ENCODE measurements at regions of chr11 and their contacts with region 1.

Region 1: DNA sequence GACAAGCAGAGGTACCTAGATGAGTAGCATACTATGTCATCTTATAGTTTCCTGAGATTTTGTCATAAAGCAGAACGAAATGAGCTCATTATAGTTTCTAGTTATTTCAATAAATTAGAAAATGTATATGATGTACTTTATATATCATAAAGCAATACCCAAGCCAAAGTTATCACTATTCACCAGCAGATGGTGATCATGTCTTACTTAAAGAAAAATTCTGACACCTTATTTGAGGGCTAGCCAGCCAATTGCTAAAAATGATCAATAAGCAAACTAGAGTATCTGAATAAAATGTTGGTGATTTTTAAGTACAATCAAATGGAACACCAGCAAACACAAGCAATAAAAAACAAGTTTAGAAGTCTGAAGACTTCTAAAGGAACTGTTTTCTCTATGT is 44.1 kb downstream of the RSF1 start:
- DNase-seq: no peak
- ATAC-seq: no peak
- H3K4me3 Mint-ChIP-seq: no peak overlapping the region
- H3K27ac Mint-ChIP-seq: no peak overlapping the region
- H3K4me1 Mint-ChIP-seq: peaks cover 55% of the 10 kb centered on the region
- H3K27me3 Mint-ChIP-seq: no peaks in the 10 kb centered on the region
- CTCF ChIP-seq: no peak

Region 2: GRCh38 chr11:78000193-78000592 is 223.7 kb after region 1 on chr11:
- CTCF ChIA-PET with region 1: interaction called, 8 read pairs
- POLR2A ChIA-PET with region 1: no interaction called
- intact Hi-C with region 1: loop called (anchors 1 kb)
- DNase-seq: no peak
- ATAC-seq: peak; percentile 52
- H3K4me3 Mint-ChIP-seq: no peak overlapping the region
- H3K27ac Mint-ChIP-seq: peak overlapping the region; percentile 84
- H3K4me1 Mint-ChIP-seq: peaks cover 28% of the 10 kb centered on the region
- H3K27me3 Mint-ChIP-seq: peaks cover 2% of the 10 kb centered on the region
- CTCF ChIP-seq: no peak

Region 3: GRCh38 chr11:78045851-78046485 is 269.5 kb after region 1 on chr11:
- CTCF ChIA-PET with region 1: interaction called, 9 read pairs
- POLR2A ChIA-PET with region 1: no interaction called
- intact Hi-C with region 1: loop called (anchors 1 kb)
- DNase-seq: peak; percentile 81
- ATAC-seq: peak; percentile 98
- H3K4me3 Mint-ChIP-seq: peak overlapping the region; percentile 72
- H3K27ac Mint-ChIP-seq: no peak overlapping the region
- H3K4me1 Mint-ChIP-seq: peaks cover 6% of the 10 kb centered on the region
- H3K27me3 Mint-ChIP-seq: peaks cover 5% of the 10 kb centered on the region
- CTCF ChIP-seq: peak; percentile 95

Measured in activated B cell treated with CpG ODN at 0.5 μM for 24 hours (primary cell).